ENCODE measurements at regions of chr15 and their contacts with region 1.

Region 1: GRCh38 chr15:59424616-59425015 is 13.4 kb upstream of the FAM81A start:
- DNase-seq: peak; percentile 58
- ATAC-seq: peak; percentile 37; the same call in 1 of the 2 replicates
- H3K4me3 ChIP-seq: no peak overlapping the region
- H3K27ac ChIP-seq: no peak overlapping the region
- H3K4me1 ChIP-seq: no peaks in the 10 kb centered on the region
- H3K27me3 ChIP-seq: no peaks in the 10 kb centered on the region
- CTCF ChIP-seq: no peak

Region 2: DNA sequence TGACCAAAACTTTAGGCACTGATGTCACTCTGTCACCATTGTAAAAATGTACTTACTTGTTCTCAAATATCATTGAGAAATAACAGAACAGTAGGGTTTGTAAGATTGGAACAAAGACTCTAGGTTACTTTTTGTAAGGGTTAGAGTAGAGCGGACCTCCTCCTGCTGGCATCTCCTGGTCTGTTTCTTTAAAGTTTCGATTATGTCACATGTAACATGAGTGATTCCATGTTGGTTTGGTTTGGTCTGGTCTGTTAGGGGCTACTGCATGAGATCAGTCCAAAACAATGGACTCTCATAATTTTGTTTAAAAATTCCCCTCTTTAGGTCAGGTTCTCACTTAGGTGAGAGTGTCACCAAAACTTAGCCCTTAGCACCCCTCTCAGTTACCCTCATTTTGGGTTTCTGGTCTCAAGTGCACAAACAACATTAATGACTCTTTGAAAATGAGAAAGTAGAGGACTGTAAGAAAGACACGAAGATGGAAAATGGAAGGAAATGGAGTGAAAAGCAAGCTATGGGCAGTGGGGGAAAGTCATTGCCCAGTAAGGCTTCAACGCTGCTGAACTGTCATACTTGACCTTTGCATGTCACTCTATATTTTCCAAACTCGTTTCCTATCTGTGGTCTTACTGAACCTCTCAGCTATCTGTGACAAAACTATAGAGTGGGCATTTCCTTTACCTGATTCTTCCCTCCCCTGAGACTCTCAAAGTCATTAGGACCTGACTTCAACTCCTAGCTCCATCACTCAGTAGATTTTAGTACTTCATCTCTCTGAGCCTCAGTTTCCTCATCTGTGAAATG is 165.3 kb before region 1 on chr15:
- CTCF ChIA-PET with region 1: no interaction called
- POLR2A ChIA-PET with region 1: interaction called, 12 read pairs
- intact Hi-C with region 1: no loop called
- DNase-seq: no peak
- ATAC-seq: no peak
- H3K4me3 ChIP-seq: no peak overlapping the region
- H3K27ac ChIP-seq: no peak overlapping the region
- H3K4me1 ChIP-seq: peaks cover 15% of the 10 kb centered on the region; the same call in 1 of the 2 replicates
- H3K27me3 ChIP-seq: no peaks in the 10 kb centered on the region
- CTCF ChIP-seq: no peak

Region 3: GRCh38 chr15:59437817-59438562 is 13.4 kb after region 1 on chr15 and contains the start of gene FAM81A:
- CTCF ChIA-PET with region 1: no interaction called
- POLR2A ChIA-PET with region 1: no interaction called
- intact Hi-C with region 1: no loop called
- DNase-seq: peak; percentile 68
- ATAC-seq: peak; percentile 89
- H3K4me3 ChIP-seq: peak within 1 kb of the TSS; percentile 81
- H3K27ac ChIP-seq: no peak within 1 kb of the TSS
- H3K4me1 ChIP-seq: peaks cover 11% of the 10 kb centered on the region; the same call in 1 of the 2 replicates
- H3K27me3 ChIP-seq: no peaks in the 10 kb centered on the region
- CTCF ChIP-seq: no peak
- total RNA-seq, gene FAM81A: 2.5 and 8.1 TPM in 2 replicates

Measured in PC-3 (cell line).